ENCODE measurements at regions of chr12 and their contacts with region 1.

Region 1: GRCh38 chr12:52980693-52981423 is 25.4 kb upstream of the EIF4B start:
- DNase-seq: peak; percentile 90
- ATAC-seq: peak; percentile 92
- H3K4me3 Mint-ChIP-seq: no peak overlapping the region
- H3K27ac Mint-ChIP-seq: no peak overlapping the region
- H3K4me1 Mint-ChIP-seq: no peaks in the 10 kb centered on the region
- H3K27me3 Mint-ChIP-seq: peaks cover 33% of the 10 kb centered on the region

Region 2: DNA sequence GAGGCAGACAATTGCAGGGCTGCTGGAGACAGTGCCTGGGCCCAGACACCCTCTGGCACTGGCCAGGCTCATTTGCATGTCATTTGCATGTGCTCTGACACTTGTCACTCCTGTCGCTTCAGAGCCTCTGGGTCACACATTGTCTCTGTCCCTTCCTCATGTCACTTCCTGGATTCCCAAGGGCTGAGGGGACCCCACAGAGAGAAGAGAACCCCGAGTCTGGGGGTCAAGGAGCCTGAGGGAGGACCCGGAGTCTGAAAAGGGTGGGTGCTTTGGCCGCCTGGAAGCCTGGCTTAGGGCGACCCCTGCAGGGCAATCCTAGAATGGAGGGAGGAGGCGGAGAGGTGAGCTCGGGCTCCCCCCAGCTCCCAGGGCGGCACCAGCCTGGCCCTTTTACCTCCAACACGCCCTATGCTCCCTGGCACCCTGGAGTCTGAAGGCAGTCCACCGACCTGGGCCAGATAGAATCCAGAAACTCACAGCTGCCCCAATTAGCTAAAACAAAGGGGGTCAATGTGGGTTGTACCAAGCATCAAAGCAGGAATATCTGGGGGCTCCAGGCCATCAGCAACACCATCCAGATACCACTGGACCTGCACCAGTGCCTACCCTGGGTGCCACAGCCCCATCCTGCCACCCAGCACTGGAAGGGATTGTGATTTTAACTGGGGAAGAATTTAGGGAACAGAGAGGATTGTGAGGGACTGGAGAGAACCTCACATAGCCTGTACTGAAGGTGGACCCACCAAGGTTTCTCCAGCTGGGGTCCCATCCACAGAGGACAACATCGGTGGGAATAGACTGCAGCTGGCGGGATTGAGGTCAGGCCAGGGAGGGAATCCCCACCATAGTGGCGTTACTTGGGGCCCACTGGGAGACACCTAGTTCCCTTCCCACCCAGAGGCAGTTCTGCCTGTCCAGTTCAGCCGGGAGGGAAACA is 110.2 kb before region 1 on chr12:
- CTCF ChIA-PET with region 1: interaction called, 11 read pairs
- DNase-seq: peak; percentile 83
- ATAC-seq: peak; percentile 53
- H3K4me3 Mint-ChIP-seq: no peak overlapping the region
- H3K27ac Mint-ChIP-seq: no peak overlapping the region
- H3K4me1 Mint-ChIP-seq: peaks cover 13% of the 10 kb centered on the region
- H3K27me3 Mint-ChIP-seq: peaks cover 6% of the 10 kb centered on the region

Region 3: GRCh38 chr12:52895061-52895887 is 85.6 kb before region 1 on chr12:
- CTCF ChIA-PET with region 1: interaction called, 19 read pairs
- DNase-seq: no peak
- ATAC-seq: no peak
- H3K4me3 Mint-ChIP-seq: no peak overlapping the region
- H3K27ac Mint-ChIP-seq: no peak overlapping the region
- H3K4me1 Mint-ChIP-seq: no peaks in the 10 kb centered on the region
- H3K27me3 Mint-ChIP-seq: peaks cover 5% of the 10 kb centered on the region

Region 4: DNA sequence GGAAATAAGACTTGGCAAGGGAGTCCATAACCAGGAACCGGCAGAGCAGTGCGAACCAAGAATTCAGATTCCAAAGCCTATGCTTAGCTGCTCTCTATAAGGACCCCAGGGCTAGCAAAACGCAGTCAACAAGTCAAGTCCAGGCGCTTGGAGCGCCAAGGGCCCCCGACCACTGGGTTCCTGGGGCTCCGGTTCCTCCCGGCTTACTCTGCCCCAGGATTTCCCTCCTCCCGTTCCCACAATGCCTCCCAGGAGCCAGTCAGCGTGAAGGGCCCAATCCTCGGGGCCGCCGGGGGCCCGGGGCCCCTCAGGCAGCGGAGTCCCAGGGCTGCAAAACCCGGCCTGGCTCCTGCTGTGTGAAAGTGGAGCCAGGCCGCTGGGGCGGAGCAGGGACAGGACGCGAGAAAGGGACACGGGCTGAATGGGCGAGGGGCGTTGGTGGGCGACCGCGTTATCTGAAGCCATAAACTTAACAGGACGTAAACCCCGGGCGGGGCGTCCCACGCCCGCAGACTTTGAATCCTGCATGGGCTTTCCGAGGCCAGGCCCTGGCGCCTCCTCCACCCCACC is 77.5 kb before region 1 on chr12:
- CTCF ChIA-PET with region 1: interaction called, 12 read pairs
- DNase-seq: peak; percentile 67
- ATAC-seq: peak; percentile 85
- H3K4me3 Mint-ChIP-seq: peak overlapping the region; percentile 5
- H3K27ac Mint-ChIP-seq: no peak overlapping the region
- H3K4me1 Mint-ChIP-seq: peaks cover 4% of the 10 kb centered on the region
- H3K27me3 Mint-ChIP-seq: no peaks in the 10 kb centered on the region

Region 5: DNA sequence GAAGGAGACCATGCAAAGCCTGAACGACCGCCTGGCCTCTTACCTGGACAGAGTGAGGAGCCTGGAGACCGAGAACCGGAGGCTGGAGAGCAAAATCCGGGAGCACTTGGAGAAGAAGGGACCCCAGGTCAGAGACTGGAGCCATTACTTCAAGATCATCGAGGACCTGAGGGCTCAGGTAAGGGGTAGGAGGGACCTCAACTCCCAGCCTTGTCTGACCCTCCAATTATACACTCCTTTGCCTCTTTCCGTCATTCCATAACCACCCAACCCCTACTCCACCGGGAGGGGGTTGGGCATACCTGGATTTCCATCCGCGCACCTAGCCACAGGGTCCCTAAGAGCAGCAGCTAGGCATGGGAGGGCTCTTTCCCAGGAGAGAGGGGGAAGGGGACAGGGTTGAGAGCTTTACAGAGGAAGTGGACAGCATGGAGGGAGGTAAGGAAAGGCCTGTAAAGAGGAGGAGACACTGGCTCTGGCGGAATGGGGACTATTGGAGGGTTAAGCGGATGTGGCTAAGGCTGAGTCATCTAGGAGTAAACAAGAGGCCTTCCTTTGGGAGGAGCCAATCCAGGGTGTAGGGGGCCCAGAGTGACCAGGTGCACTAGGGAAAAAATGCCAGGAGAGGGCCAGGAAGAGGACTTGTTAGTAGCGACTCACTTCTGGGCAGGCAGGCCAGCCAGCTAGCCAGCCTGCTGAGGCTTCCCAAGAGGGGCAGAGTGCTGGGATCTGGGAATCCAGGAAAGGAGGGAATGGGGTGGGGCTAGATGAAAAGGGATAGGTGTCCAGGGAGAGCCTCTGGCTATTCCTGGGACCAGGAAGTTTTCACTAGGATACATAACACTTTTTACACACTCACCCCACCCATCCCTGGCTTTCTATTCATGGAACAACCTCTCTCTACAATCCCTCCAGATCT is 31.2 kb before region 1 on chr12:
- CTCF ChIA-PET with region 1: interaction called, 11 read pairs
- DNase-seq: no peak
- ATAC-seq: no peak
- H3K4me3 Mint-ChIP-seq: peak overlapping the region; percentile 11
- H3K27ac Mint-ChIP-seq: no peak overlapping the region
- H3K4me1 Mint-ChIP-seq: peaks cover 2% of the 10 kb centered on the region
- H3K27me3 Mint-ChIP-seq: peaks cover 16% of the 10 kb centered on the region

Region 6: DNA sequence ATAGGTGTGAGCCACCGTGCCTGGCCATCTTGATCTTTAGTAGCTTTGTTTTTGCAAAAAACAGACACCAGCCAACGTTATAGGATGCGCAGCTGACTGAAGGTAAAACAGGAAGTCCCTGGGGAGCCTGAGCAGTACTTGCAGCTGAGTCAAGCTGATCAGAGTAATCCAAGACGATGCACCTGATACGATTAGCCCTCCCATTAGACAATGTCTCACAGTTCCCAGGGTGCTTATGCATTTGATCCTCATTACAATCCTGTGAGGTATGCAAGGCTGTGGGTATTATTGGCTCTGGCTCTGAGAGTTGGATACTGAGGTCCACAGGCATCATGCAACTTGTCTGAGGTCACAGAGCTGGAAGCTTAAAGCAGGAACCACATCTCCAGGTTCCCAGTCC is 23.9 kb before region 1 on chr12:
- CTCF ChIA-PET with region 1: interaction called, 11 read pairs
- DNase-seq: no peak
- ATAC-seq: no peak
- H3K4me3 Mint-ChIP-seq: no peak overlapping the region
- H3K27ac Mint-ChIP-seq: no peak overlapping the region
- H3K4me1 Mint-ChIP-seq: peaks cover 3% of the 10 kb centered on the region
- H3K27me3 Mint-ChIP-seq: peaks cover 4% of the 10 kb centered on the region

Region 7: GRCh38 chr12:52992699-52993557 is 12.1 kb after region 1 on chr12:
- CTCF ChIA-PET with region 1: interaction called, 20 read pairs
- DNase-seq: no peak
- ATAC-seq: no peak
- H3K4me3 Mint-ChIP-seq: no peak overlapping the region
- H3K27ac Mint-ChIP-seq: no peak overlapping the region
- H3K4me1 Mint-ChIP-seq: no peaks in the 10 kb centered on the region
- H3K27me3 Mint-ChIP-seq: peaks cover 4% of the 10 kb centered on the region

Region 8: GRCh38 chr12:53079226-53080117 is 98.6 kb after region 1 on chr12 and contains the start of gene SPRYD3:
- CTCF ChIA-PET with region 1: no interaction called
- DNase-seq: peak; percentile 97
- ATAC-seq: peak; percentile 97
- H3K4me3 Mint-ChIP-seq: peak within 1 kb of the TSS; percentile 80
- H3K27ac Mint-ChIP-seq: peak within 1 kb of the TSS; percentile 88
- H3K4me1 Mint-ChIP-seq: peaks cover 31% of the 10 kb centered on the region
- H3K27me3 Mint-ChIP-seq: no peaks in the 10 kb centered on the region
- total RNA-seq, gene SPRYD3: 27.8 to 29.7 TPM

Measured in activated CD8-positive, alpha-beta memory T cell treated with anti-CD3 and anti-CD28 coated beads, Interleukin-2, amount 10 ng/mL, durations not matched to agents 7 days and 5 days (primary cell).